ENCODE measurements at regions of chr16 and their contacts with region 1.

Region 1: DNA sequence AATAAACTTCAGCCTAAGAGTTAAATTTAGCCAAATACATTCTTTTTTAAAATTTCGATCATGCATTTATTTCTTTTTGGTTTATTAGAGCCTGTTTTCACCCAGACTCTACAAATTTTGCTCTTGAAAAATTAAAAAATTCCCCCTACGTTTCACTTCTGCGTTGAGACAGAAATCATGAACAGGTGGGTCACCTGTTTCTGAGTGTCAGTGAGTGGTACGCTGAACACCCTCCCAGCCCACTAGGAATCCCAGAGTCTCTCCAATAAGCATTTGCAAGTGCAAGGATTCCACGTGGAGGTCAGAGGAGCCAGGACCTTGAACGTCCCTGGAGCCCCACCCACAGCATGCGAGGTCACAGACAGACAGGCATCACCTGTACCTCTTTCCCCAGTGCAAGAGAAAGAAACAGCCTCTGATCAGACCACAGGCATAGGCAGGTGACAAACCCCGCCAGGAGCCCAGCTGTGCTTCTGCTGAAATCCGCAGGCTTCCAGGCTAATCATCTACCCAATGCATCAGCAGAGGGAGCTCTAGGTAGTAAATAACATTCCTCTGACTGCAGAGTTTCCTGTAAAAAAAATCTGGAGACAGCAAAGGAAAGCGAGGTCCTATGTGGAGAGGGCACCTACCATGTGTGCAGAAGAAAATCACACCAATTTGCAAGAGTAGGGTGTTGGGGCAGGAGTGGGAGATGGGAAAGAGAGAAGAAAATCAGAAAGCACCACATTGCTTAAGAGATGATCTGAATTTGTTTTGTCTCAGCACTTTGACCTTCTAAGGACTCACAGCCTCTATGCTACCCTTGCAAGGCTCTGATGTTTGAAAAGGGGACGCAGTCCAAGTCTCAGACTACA is 5.9 kb upstream of the XYLT1 start:
- DNase-seq: no peak
- H3K4me3 ChIP-seq: no peak overlapping the region
- H3K27ac ChIP-seq: no peak overlapping the region
- H3K4me1 ChIP-seq: peaks cover 0 to 12% (median 0%) of the 10 kb centered on the region in 3 donors
- H3K27me3 ChIP-seq: peaks cover 0 to 27% (median 0%) of the 10 kb centered on the region in 4 donors
- CTCF ChIP-seq: peak; percentile 30 to 66 (median 54)
- POLR2A ChIP-seq: no peak

Region 2: GRCh38 chr16:17224879-17225281 is 251.8 kb before region 1 on chr16:
- intact Hi-C with region 1: loop called (anchors 10 kb)
- DNase-seq: no peak
- H3K4me3 ChIP-seq: no peak overlapping the region
- H3K27ac ChIP-seq: peak overlapping the region; percentile 40 to 68 (median 64)
- H3K4me1 ChIP-seq: peaks cover 16 to 67% (median 28%) of the 10 kb centered on the region in 3 donors
- H3K27me3 ChIP-seq: no peaks in the 10 kb centered on the region
- CTCF ChIP-seq: peak in 1 of 6 experiments; percentile 6
- POLR2A ChIP-seq: no peak